ENCODE measurements at regions of chr19 and their contacts with region 1.

Region 1: GRCh38 chr19:2610637-2611482 is 91.6 kb downstream of the GNG7 start:
- DNase-seq: peak; percentile 86
- H3K4me3 ChIP-seq: peak overlapping the region; percentile 50
- H3K27ac ChIP-seq: no peak overlapping the region
- H3K27me3 ChIP-seq: peaks cover 2% of the 10 kb centered on the region
- CTCF ChIP-seq: peak; percentile 97

Region 2: DNA sequence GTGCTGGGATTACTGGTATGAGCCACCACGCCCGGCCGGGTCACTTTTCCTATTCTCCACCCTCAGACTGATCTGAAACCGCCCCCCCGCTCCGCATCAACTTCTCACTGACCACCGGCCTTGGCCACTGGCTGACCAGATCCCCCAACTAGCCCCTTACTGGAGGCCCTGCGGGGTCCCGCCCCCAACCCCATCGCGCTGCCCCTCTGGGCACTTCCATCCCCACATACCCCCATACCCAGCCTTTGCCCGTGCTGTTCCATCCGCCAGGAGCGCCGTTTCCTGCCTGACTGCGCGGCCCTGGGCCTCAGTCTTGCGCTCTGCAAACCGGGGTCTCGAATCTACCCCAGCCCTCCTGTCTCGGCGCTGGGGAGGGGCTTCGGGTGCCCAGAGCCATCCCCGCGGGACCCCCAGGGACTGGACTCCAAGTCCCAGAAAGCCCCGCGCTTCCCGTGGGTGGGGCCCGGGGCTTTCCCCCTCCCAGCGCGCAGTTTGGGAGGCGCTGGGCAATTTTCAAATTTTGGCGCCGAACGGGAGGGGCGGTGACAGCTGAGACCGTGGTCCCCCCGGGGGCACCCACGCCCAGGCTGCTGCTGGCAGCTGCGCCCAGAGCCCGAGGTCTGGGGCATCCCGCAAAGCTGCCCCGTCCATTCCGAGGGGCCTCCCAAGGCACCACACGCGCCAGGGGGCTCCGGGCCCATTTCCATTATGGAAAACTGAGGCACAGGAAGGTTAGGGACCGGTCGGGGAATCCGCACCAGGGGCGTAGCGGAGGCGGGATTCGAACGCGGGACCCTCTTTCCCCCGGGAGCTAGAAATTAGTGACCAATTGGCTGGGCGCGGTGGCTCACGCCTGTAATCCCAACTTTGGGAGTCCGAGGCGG is 148.9 kb before region 1 on chr19:
- CTCF ChIA-PET with region 1: interaction called, 12 read pairs
- POLR2A ChIA-PET with region 1: interaction called, 5 read pairs
- DNase-seq: no peak
- H3K4me3 ChIP-seq: peak overlapping the region; percentile 73
- H3K27ac ChIP-seq: no peak overlapping the region
- H3K27me3 ChIP-seq: no peaks in the 10 kb centered on the region
- CTCF ChIP-seq: peak; percentile 25

Region 3: DNA sequence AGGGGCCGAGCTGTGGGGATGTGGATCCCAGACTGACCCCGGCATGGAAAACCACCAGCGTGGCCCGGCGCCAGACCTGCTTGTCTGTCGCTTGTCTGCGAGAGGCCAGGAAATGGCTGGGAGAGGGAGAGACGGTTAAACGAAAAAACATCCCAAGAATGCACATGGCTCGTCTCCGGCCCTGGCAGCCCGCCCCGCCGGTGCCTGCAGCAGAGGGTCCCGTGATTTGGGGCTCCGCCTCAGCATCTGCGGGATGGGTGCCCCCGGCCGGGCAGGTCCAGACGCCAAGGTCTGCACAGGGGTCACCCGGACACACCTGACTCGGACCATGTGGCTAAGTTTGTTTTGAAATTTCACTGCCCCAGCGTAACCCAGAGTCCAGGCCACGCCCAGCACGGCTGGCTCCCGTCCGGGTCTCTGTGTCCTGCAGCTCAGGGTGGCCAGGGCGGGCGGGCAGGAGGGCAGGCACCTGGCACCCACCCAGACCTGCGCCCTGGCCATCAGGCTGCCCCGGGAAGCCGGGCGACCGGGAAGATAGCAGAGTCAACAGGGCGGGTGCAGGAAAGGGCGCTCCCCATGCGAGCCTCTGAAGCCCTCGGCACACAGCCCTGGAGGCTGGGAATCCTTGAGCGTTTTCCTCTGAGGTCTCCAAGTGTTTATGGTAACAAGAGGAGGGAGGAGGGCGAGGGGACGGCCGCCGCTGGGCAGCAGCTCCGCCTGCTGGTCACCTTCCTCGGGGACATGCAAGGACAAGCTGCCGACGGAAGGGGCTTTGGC is 31.8 kb before region 1 on chr19:
- CTCF ChIA-PET with region 1: interaction called, 5 read pairs
- POLR2A ChIA-PET with region 1: interaction called, 10 read pairs
- DNase-seq: peak; percentile 61
- H3K4me3 ChIP-seq: peak overlapping the region; percentile 64
- H3K27ac ChIP-seq: peak overlapping the region; percentile 75
- H3K27me3 ChIP-seq: no peaks in the 10 kb centered on the region
- CTCF ChIP-seq: peak; percentile 94

Region 4: GRCh38 chr19:2627319-2627829 is 16.5 kb after region 1 on chr19:
- CTCF ChIA-PET with region 1: interaction called, 11 read pairs
- POLR2A ChIA-PET with region 1: interaction called, 7 read pairs
- DNase-seq: peak; percentile 90
- H3K4me3 ChIP-seq: no peak overlapping the region
- H3K27ac ChIP-seq: peak overlapping the region; percentile 93
- H3K27me3 ChIP-seq: no peaks in the 10 kb centered on the region
- CTCF ChIP-seq: no peak

Measured in AG04450 (cell line).